Prostate gland (tissue), 2 donors: ENCODE measurements at regions of chr11 and their contacts with region 1.

Region 1: DNA sequence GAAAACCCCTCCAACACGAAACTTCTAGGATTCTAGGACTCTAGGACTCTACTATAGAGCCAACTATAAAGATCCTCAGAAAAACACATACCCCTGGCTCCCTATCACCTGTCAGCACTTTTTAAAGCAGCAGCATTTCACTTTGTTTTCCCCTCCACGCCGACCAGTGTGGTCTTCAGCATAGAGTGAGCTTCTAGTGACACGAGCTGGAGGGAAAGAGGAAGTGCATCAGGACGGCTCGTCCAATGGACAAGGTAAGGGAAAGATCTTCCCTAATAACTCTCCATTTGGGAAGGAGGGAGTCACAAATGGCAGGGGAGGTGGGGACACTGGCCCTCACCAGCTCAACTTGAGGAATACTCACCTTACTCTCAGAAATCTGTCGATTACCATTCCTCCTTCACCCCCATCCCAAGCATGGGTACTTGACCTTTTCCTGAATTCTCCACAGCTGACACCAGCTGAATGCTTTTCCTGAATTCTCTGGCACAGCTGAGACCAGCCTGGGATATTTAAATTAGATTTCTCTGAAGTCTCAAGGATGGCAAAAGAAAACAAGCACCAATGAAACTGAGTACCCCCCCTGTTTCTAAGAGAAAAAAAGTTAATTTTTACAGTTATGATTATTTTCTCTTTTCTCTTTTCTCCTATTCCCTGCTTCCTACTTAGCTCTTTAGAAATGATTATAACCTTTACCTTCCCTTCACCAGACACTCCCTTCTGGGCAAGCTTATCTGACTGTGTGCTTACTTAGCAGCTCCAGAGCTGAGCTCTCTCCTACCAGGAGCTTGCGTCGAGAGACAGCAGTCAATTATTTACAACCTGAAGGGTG is 33.3 kb upstream of the NNMT start:
- DNase-seq: no peak
- H3K4me3 ChIP-seq: no peak overlapping the region
- H3K27ac ChIP-seq: no peak overlapping the region
- H3K4me1 ChIP-seq: peaks cover 17% of the 10 kb centered on the region
- H3K27me3 ChIP-seq: no peaks in the 10 kb centered on the region
- CTCF ChIP-seq: peak in 3 of 4 experiments; percentile 27 to 74 (median 71)
- POLR2A ChIP-seq: no peak

Region 2: GRCh38 chr11:113896156-113896879 is 366.6 kb before region 1 on chr11:
- intact Hi-C with region 1: loop called (anchors 2 kb)
- DNase-seq: peak; percentile 46
- H3K4me3 ChIP-seq: no peak overlapping the region
- H3K27ac ChIP-seq: no peak overlapping the region
- H3K4me1 ChIP-seq: no peaks in the 10 kb centered on the region
- H3K27me3 ChIP-seq: no peaks in the 10 kb centered on the region
- CTCF ChIP-seq: peak; percentile 50 to 78 (median 70)
- POLR2A ChIP-seq: no peak

Region 3: GRCh38 chr11:113994077-113994954 is 268.6 kb before region 1 on chr11:
- intact Hi-C with region 1: loop called (anchors 1 kb)
- DNase-seq: no peak
- H3K4me3 ChIP-seq: no peak overlapping the region
- H3K27ac ChIP-seq: no peak overlapping the region
- H3K4me1 ChIP-seq: no peaks in the 10 kb centered on the region
- H3K27me3 ChIP-seq: no peaks in the 10 kb centered on the region
- CTCF ChIP-seq: peak; percentile 47 to 81 (median 70)
- POLR2A ChIP-seq: no peak

Region 4: GRCh38 chr11:114036156-114036811 is 226.6 kb before region 1 on chr11:
- intact Hi-C with region 1: loop called (anchors 1 kb)
- DNase-seq: peak; percentile 87
- H3K4me3 ChIP-seq: peak overlapping the region; percentile 24 to 38
- H3K27ac ChIP-seq: peak overlapping the region; percentile 96 to 98
- H3K4me1 ChIP-seq: peaks cover 13% of the 10 kb centered on the region
- H3K27me3 ChIP-seq: no peaks in the 10 kb centered on the region
- CTCF ChIP-seq: peak; percentile 83 to 97 (median 94)
- POLR2A ChIP-seq: no peak

Region 5: GRCh38 chr11:114049050-114049449 is 213.8 kb before region 1 on chr11:
- intact Hi-C with region 1: no loop called
- DNase-seq: no peak
- H3K4me3 ChIP-seq: no peak overlapping the region
- H3K27ac ChIP-seq: no peak overlapping the region
- H3K4me1 ChIP-seq: no peaks in the 10 kb centered on the region
- H3K27me3 ChIP-seq: no peaks in the 10 kb centered on the region
- CTCF ChIP-seq: no peak
- POLR2A ChIP-seq: no peak

Region 6: DNA sequence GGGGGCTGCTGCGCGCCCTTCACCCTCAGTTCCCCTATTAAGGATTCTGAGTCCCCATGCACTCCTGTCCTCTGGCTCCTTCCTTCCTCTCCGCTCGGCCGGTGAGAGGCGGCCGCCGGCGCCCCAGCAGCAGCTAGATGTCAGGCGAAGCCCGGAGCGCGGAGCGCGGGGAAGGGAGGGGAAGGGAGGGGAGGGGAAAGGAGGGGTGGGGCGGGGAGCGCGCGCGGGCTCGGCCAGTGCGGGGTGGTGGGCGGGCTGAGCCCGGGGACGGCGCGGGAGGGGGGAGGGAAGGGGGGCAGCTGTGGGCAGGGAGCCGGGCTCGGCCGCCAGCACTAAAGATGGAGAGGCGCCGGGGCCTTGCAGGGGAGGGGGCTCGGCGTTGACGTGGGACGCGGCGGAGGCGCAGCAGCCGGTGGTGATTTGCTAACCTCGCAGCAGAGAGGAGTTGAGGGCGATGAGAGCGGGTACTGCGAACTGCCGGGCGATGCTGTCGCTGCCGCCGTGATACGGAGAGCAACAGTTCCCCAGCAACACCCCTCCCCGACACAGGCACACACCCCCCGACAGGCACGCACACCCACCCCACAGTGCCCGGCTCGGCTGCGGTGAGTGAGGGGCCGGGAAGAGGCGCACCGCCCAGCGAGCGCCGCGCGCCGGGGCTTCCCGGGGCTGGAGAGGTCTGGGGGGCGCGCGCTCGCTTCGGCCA is 203.5 kb before region 1 on chr11 and contains the start of gene ZBTB16:
- intact Hi-C with region 1: loop called (anchors 2 kb)
- DNase-seq: peak; percentile 88
- H3K4me3 ChIP-seq: peak within 1 kb of the TSS; percentile 97 to 99
- H3K27ac ChIP-seq: peak within 1 kb of the TSS; percentile 100
- H3K4me1 ChIP-seq: peaks cover 11% of the 10 kb centered on the region
- H3K27me3 ChIP-seq: no peaks in the 10 kb centered on the region
- CTCF ChIP-seq: peak; percentile 9 to 67 (median 54)
- POLR2A ChIP-seq: peak; percentile 79
- total RNA-seq, gene ZBTB16: 171 to 230 TPM